ENCODE measurements at regions of chr11 and their contacts with region 1.

Region 1: GRCh38 chr11:62726915-62727763 is at the start of gene HNRNPUL2:
- DNase-seq: peak; percentile 92

Region 2: GRCh38 chr11:62035293-62035692 is 691.8 kb before region 1 on chr11:
- CTCF ChIA-PET with region 1: no interaction called
- POLR2A ChIA-PET with region 1: no interaction called
- DNase-seq: no peak

Region 3: DNA sequence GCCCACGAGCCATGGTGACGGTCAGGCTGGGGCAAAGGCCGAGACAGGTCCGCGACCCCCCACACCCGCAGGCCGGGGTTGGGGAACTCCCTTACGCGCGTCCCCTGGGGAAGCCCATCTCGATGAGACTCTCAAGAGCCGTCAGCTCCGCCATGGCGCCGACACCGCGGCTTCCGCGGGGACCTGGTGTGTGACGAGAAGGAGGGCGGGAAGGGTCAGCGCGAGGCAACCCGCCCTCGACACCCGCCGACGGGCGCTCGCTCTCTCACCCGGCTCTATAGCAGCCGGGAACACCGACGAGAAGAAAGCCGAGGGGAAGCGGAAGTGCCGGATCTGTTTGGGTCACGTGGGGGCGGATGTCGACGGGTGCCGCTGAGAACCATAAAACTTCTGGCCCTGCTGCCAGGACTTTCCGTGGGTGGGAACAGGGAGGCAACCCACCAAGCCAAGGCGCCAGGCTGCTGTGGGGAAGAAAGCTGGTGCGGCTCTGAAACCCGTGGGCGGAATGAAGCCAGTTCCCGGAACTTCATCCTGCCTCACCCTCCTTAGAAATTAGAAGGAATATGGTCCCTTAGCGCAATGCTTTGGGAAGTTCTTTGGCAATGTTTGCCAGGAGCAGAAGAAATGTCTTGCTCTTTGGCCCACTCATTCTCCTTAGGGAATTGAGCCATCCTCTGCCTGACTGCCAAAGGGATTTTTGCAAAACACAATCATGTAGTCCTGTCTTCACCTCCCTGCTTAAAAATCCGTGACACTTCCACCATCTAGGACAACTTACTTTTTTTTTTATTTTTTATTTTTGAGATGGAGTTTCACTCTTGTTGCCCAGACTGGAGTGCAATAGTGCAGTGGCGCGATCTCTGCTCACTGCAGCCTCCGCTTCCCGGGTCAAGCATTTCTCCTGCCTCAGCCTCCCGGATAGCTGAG is 48.1 kb before region 1 on chr11 and contains the start of gene UBXN1:
- CTCF ChIA-PET with region 1: interaction called, 4 read pairs
- POLR2A ChIA-PET with region 1: interaction called, 13 read pairs
- DNase-seq: peak; percentile 84

Region 4: GRCh38 chr11:62694455-62695167 is 32.5 kb before region 1 on chr11:
- CTCF ChIA-PET with region 1: no interaction called
- POLR2A ChIA-PET with region 1: no interaction called
- DNase-seq: peak; percentile 69

Region 5: DNA sequence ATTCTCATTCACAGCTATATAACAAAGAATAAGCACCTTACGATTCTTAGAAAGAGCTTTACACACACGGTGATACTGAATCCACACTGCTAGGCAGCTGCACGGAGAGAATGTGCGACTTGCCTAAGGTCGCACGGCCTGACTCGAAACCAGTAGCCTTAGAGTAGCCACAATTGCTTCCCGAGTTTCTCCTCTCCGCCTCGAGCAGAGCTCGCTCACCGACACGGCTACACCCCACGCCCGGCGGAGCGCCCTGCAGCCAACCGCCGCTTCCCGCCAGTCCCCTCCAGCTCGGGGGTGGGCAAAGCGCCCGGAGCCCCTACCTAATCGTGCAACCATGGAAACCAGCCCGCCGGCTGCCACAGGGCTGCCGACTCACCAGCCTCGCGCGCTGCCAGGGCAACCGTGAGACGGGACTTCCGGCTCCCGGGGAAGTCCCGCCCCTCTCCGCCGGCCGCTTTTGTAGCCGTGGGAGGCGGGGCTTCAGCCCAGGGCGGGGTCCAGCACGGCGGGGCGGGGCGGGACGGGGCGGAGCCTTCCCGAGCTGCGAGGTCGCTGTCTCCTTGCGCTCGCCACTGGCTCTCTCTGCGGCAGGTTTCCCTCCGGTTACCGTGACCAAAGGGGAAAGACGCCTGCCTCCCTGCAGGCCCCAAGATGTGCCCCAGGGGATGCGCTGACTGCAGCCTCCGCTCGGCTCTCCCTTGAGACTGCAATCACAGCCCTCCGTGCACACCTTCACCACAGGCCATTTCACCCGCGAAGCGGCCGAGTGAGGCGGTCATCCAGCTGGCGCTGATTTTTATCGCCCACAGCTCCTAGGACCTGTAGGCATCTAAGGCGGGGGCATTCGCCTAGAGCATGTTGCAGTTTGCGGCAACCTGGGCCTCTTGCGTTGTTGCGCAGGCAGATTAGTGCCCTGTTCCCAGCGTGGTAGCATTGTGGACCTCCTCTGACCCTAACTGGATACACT is 21.0 kb before region 1 on chr11:
- CTCF ChIA-PET with region 1: no interaction called
- POLR2A ChIA-PET with region 1: interaction called, 65 read pairs
- DNase-seq: peak; percentile 93

Region 6: DNA sequence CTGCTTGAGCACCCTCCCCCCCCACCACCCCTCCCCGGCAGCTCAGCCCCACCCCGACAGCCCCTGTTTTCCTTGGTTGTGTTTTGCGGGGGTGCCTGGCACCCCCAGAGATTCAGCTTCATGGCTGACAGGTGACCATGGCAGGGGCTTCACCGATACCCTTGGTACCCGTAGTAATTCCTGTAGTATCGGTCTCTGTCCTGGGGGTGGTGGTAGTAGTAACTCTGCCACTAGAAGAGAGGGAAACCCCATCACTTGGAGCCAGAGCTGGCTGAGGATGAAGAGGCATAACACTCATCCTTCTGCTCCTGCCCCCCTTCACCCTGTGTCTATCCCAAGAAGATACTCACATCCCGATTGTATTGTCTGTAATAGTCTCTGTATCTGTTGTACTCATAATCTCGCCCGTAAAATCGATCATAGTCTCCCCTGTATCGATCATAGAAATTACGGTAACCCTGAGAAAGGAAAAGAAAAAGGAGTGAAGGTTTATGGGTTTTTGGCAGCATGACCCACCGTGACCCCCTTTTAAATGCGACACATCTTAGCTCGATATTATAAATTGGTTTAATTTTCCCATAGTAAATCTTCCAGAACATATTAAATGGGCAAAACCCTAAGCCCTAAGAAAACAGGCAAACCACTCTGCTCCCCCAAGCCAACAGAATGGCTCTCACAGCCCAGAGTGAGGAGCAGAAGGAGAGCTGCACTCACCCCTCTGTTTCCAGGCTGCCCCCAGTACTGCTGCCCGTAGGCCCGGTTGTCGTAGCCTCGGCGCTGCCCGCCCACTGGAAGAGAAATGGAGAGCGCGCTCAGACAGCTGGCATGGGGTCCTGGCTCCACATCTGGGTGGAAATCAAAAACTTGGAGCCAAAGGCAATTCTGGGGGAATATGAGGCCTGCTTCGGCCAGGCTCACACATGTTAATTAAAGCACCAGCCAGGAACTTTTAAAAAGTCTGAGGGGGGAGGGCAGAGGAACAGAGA is 11.7 kb before region 1 on chr11:
- CTCF ChIA-PET with region 1: interaction called, 3 read pairs
- POLR2A ChIA-PET with region 1: interaction called, 65 read pairs
- DNase-seq: no peak

Region 7: DNA sequence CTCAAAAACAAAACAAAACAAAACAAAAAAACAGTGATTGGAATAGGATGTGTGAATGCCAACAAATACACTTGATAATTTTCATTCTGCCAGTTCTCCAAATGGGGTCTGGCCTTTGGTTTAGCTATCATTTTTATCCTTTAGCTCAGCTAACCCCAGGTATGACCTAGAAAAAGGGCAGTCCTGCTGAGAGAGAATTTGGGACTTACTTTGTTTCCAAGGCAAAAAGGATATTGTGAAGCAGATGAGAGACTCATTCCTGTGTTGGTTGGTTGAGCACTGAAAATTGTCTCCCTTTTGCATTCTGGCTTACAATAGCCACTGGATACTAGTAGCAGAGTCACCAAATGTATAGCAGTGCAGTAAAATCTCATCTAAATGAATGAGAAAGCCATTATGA is 10.1 kb after region 1 on chr11:
- CTCF ChIA-PET with region 1: no interaction called
- POLR2A ChIA-PET with region 1: no interaction called
- DNase-seq: no peak

Region 8: DNA sequence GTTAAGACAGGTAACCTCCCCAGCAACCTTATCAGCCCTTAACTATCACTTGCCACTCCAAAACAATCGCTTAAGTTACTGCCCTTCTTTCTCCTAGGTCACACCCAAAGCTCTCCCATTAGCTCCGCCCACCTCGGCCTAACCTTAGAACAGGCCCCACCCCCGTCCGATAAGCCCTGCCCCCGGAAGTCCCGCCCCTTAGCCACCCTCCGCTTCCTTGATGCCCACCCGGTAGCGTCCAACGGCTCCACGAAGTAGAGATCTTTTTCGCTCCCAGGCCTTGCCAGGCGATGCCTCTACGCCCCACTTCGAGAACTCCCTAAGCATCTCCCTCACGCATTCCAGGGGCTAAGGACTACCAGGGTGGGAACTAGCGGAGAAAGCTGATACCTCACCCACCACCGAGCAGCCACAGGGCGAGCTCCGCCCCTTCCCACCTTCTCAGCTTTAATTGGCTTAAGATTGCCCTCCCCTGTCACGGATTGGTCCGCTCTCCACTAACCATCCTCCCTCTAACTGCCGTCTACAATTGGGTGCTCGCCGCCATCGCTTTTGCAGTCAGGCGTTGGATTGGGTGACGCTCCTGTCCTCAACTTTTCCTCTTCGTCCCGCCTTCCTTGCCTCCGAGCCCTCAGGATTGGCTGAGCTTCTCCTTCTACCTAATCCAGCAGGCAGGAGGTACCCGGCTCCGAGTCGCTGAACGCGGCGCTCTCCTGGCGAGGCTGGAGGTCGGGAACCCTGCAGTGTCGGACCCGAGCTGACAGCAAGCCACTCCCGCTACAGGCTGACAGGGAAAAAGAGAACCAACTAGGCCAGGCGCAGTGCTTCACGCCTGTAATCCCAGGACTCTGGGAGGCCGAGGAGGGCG is 26.8 kb after region 1 on chr11 and contains the start of gene ZBTB3:
- CTCF ChIA-PET with region 1: no interaction called
- POLR2A ChIA-PET with region 1: interaction called, 97 read pairs
- DNase-seq: peak; percentile 94

Region 9: GRCh38 chr11:62771144-62772021 is 44.2 kb after region 1 on chr11 and contains the start of gene TAF6L:
- CTCF ChIA-PET with region 1: interaction called, 4 read pairs
- POLR2A ChIA-PET with region 1: interaction called, 17 read pairs
- DNase-seq: peak; percentile 92

Region 10: GRCh38 chr11:62787005-62787759 is 60.0 kb after region 1 on chr11 and contains the start of gene TMEM179B:
- CTCF ChIA-PET with region 1: interaction called, 6 read pairs
- POLR2A ChIA-PET with region 1: interaction called, 11 read pairs
- DNase-seq: peak; percentile 91